Heart left ventricle (tissue), 16 donors: ENCODE measurements at regions of chr2 and their contacts with region 1.

Region 1: DNA sequence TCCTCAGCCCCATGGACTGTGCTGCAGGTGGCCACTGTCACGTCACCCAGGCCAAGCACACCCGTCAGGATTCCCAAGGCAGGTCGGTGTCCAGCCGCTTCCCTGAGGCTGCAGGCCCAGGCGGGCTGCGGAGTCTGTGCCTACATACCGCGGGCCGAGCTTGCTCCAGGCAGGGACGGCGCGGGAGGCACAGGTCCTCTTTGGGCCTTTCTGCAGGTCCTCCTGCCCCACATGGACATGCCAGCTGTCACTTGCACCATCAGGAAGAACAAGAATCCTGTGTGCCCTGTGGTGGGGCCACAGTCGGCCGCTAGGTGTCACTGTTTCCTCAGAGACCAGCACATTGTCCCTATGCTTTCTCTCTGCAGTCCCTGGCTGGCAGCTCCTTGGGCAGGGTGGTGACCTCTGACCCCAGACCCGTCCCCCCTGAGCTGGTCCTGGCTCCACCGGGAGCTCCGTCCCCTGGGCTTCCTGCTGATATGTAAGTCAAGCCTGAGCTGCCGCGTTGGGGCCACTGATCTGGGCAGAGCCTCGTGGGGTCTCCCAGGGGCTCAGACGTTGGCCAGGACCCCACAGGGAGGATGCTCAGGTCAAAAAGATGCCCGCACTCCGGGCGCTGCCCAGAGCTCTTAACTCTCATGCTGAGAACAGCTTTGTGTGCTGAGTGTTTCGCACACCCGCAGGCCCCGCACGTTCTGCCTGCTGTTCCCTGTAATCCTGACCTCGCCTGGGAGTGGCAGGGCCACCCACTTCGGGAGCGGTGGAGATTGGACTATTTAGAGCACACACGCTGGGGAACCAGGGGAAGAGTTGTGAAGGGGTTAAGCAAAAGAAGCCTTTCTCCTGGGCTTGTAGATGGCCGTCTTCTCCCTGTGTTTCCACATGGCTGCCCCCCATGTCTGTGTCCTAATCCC is 17.3 kb upstream of the AGXT start:
- DNase-seq: peak; percentile 71 to 89 (median 79)
- ATAC-seq: peak; percentile 79 to 93 (median 92)
- H3K4me3 ChIP-seq: no peak overlapping the region
- H3K27ac ChIP-seq: no peak overlapping the region
- H3K4me1 ChIP-seq: no peaks in the 10 kb centered on the region
- H3K27me3 ChIP-seq: no peaks in the 10 kb centered on the region
- CTCF ChIP-seq: peak; percentile 88 to 98 (median 96)
- POLR2A ChIP-seq: no peak

Region 2: DNA sequence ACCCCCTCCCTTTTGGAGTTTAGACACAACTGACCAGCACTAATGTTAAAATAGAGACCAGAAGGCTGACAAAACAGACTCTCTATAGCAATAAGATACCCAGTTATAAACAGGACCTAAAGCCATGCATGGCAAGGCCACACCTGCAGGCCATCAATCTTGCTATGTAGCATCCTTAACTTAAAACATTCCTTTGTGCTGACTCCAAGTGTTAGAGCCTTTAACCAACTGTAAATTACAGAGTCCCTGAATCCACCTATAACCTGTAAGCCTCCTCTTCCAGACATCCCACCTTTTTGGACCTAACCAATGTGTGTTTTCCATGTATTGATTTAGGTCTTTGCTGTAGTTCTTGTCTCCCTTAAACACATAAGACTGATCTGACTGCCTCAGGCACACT is 311.4 kb before region 1 on chr2:
- intact Hi-C with region 1: no loop called
- DNase-seq: no peak
- ATAC-seq: no peak
- H3K4me3 ChIP-seq: no peak overlapping the region
- H3K27ac ChIP-seq: no peak overlapping the region
- H3K4me1 ChIP-seq: no peaks in the 10 kb centered on the region
- H3K27me3 ChIP-seq: no peaks in the 10 kb centered on the region
- CTCF ChIP-seq: no peak
- POLR2A ChIP-seq: no peak

Region 3: DNA sequence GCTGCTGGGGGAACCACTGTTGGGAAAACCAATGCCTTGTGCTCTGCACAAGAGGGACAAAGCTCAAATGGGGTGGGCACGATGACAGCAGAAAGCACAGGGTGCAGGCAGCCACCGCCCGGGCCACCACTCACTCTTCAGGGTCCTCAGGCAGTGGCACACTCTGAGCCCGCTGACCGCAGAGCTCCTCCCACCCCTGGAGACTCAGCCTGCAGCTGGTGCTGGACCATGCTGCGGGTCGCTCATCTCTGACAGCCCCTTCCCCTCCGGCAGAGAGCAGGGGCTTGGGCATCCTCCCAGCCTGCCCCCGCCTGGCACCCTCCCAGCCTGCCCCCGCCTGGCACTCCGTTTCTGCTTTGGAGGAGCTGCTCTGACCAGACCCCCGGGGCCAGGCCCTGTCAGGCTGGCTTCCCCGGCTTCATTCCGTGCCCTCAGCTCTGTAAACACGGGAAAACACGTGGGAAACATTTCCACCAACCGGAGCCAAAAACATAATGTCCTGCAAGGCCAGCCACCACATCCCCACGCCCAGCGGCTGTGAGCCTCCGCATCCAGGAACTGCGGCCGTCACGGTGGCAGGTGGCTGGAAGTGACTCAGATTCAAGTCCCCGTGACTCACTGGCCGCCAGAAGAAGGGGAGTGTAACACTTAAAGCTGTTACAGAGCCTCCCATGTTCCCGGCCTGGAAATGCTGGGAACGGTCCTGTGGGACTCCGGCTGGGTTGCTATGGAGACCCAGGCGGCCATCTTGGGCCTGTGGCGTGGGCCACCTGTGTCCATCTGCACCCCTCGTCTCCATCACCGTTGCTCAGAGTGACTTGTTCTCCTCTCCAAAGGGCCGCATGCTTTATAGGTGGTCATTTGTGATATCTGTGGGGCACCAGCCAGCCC is 140.3 kb after region 1 on chr2:
- intact Hi-C with region 1: loop called in 7 of 10 experiments (anchors 2 to 10 kb)
- DNase-seq: peak; percentile 70 to 93 (median 86)
- ATAC-seq: peak; percentile 77 to 89 (median 84)
- H3K4me3 ChIP-seq: no peak overlapping the region
- H3K27ac ChIP-seq: peak overlapping the region in 11 of 12 donors; percentile 30 to 77 (median 58)
- H3K4me1 ChIP-seq: peaks cover 0 to 55% (median 28%) of the 10 kb centered on the region in 12 donors
- H3K27me3 ChIP-seq: no peaks in the 10 kb centered on the region
- CTCF ChIP-seq: no peak
- POLR2A ChIP-seq: peak in 1 of 2 donors; percentile 15

Region 4: DNA sequence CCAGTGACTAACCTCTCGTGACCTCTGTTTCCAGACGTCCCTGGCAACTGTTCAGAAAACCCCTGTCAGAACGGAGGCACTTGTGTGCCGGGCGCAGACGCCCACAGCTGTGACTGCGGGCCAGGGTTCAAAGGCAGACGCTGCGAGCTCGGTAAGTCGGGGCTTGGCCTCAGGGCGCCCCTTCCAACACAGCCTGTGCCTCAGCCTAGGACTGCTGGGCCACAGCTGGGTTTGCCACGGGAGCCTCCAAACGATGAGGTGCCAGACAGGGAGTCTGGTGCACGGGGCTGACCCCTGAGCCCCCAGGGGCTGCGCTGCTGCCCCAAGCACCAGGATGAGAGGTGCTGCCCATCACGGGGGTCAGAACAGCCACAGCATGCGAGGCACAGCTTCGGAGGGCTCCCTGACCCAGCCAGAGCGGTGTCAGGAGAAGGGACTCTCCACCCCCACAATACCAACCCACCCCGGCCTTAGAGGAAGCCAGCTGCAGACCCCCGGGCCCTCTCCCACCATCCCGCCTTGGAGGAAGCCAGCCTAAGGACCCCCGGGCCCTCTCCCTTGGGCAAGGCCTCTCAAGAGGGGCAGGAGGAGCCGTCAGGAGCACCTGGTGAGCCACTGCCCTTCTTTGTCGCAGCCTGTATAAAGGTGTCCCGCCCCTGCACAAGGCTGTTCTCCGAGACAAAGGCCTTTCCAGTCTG is 230.5 kb after region 1 on chr2:
- intact Hi-C with region 1: loop called in 3 of 10 experiments (anchors 1 to 10 kb)
- DNase-seq: no peak
- ATAC-seq: peak in 3 of 4 donors; percentile 16 to 33 (median 33)
- H3K4me3 ChIP-seq: no peak overlapping the region
- H3K27ac ChIP-seq: no peak overlapping the region
- H3K4me1 ChIP-seq: peaks cover 0 to 4% (median 0%) of the 10 kb centered on the region in 12 donors
- H3K27me3 ChIP-seq: no peaks in the 10 kb centered on the region
- CTCF ChIP-seq: no peak
- POLR2A ChIP-seq: no peak

Region 5: GRCh38 chr2:241217320-241218031 is 366.1 kb after region 1 on chr2:
- intact Hi-C with region 1: loop called in 2 of 10 experiments (anchors 5 kb)
- DNase-seq: peak; percentile 69 to 81 (median 73)
- ATAC-seq: peak; percentile 30 to 85 (median 84)
- H3K4me3 ChIP-seq: peak overlapping the region; percentile 14 to 93 (median 60)
- H3K27ac ChIP-seq: peak overlapping the region in 11 of 12 donors; percentile 26 to 89 (median 83)
- H3K4me1 ChIP-seq: peaks cover 0 to 17% (median 10%) of the 10 kb centered on the region in 12 donors
- H3K27me3 ChIP-seq: no peaks in the 10 kb centered on the region
- CTCF ChIP-seq: peak in 2 of 12 donors; percentile 14 to 18
- POLR2A ChIP-seq: no peak

Region 6: DNA sequence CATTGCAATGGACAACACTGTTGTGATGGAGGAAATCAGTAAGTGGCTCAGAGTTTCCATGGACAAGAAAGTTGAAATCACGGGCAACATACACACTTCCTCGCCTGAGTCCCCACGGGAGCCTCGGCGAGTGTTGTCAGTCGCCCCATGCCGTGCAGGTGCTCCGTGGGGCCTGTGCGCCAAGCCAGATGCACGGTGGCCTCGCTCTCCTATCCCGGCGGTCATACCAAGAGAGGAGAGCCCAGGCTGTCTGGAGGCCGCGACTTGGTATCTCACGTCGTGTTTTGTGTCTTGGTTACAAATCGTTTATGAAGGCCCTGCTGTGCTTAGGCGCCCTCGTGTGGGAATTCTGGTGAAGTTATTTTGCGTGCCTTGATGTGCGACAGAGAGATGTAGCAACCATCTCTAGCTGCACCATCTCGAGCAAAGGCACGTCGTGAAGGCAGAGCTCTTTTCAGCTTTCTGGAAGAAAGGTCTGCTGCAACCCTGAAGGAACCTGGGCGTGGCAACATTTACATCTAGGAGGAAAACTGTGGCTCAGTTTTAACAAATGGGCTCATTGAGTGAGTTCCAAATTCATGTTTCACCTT is 807.9 kb after region 1 on chr2:
- intact Hi-C with region 1: loop called in 2 of 10 experiments (anchors 10 kb)
- DNase-seq: peak in 4 of 5 donors; percentile 34 to 64 (median 59)
- ATAC-seq: peak; percentile 9 to 68 (median 51)
- H3K4me3 ChIP-seq: no peak overlapping the region
- H3K27ac ChIP-seq: no peak overlapping the region
- H3K4me1 ChIP-seq: peaks cover 0 to 7% (median 0%) of the 10 kb centered on the region in 12 donors
- H3K27me3 ChIP-seq: no peaks in the 10 kb centered on the region
- CTCF ChIP-seq: peak; percentile 31 to 75 (median 54)
- POLR2A ChIP-seq: no peak